CD8-positive, alpha-beta memory T cell (primary cell): ENCODE measurements at regions of chr17 and their contacts with region 1.

Region 1: DNA sequence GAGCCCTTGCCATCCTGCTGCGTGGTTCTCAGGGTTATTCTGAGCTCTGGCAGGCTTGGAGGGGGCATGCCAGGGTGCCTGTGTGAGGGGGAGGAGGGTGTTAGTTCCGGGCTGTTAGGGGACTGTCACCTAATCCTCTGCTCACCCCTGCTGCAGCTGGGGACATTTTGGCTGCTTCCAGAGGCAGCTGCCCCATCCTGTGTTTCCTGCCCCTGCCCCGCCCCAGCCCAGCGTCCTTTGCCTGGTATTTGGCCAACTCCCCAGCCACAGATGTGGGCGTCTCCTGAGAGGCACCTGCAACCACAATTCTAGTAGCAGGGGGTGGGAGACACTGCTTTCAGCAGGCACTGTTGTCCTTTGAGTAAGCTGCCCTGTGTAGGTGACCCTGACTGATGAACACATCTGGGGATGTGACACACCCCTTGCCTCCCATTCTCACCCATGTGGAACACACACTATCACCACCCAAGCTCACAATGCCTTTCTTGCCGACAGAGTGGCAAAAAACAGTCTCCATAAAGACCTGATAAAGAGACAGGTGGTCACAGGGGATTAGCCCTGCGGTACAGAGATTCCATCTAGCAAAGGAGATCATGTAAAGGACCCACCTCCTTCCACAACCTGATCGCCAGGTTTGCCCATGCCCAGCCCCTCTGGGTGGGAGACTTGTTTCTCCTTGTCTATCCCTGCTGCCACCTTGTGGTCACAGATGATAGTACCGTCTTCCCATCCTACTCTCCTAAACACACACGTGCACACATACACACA is at the start of gene CHRNE:
- DNase-seq: peak; percentile 63 to 82 (median 71)
- H3K4me3 ChIP-seq: peak within 1 kb of the TSS; percentile 61
- H3K4me3 Mint-ChIP-seq: peak within 1 kb of the TSS; percentile 70 to 86 (median 79)
- H3K27ac ChIP-seq: peak within 1 kb of the TSS; percentile 58
- H3K27ac Mint-ChIP-seq: peak within 1 kb of the TSS; percentile 83 to 96 (median 92)
- H3K4me1 ChIP-seq: peaks cover 46% of the 10 kb centered on the region
- H3K4me1 Mint-ChIP-seq: peaks cover 28 to 58% (median 35%) of the 10 kb centered on the region in 3 donors
- H3K27me3 ChIP-seq: no peaks in the 10 kb centered on the region
- H3K27me3 Mint-ChIP-seq: peaks cover 0 to 7% of the 10 kb centered on the region in 2 donors
- total RNA-seq, gene CHRNE: 0.37 to 0.38 TPM

Region 2: DNA sequence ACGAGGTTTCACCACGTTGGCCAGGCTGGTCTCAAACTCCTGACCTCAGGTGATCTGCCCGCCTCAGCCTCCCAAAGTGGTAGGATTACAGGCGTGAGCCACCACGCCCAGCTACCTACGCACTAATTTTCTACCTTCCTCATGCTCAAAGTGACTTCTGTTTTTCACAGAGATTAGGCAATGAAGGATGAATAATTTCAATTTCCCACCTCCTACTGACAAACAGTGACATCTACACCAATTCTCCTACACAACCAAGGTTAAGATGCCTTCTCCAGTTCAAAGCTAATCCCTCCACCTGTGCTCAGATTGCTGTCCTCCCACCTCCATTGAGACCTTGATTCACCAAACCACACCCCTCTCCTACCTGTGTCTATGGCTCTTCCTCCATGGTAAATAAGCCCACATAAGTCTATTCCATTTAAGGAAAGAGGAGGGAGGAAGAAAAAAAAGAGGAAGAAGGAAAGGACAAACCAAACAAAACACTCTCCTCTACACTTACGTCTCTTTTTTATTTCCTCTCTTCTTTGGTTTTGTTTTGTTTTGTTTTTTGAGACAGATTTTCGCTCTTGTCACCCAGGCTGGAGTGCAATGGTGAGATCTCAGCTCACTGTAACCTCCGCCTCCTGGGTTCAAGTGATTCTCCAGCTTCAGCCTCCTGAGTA is 177.5 kb before region 1 on chr17:
- CTCF ChIA-PET with region 1: no interaction called
- POLR2A ChIA-PET with region 1: no interaction called
- DNase-seq: no peak
- H3K4me3 ChIP-seq: no peak overlapping the region
- H3K4me3 Mint-ChIP-seq: no peak overlapping the region
- H3K27ac ChIP-seq: no peak overlapping the region
- H3K27ac Mint-ChIP-seq: no peak overlapping the region
- H3K4me1 ChIP-seq: no peaks in the 10 kb centered on the region
- H3K4me1 Mint-ChIP-seq: peaks cover 14 to 24% (median 15%) of the 10 kb centered on the region in 3 donors
- H3K27me3 ChIP-seq: no peaks in the 10 kb centered on the region
- H3K27me3 Mint-ChIP-seq: no peaks in the 10 kb centered on the region

Region 3: DNA sequence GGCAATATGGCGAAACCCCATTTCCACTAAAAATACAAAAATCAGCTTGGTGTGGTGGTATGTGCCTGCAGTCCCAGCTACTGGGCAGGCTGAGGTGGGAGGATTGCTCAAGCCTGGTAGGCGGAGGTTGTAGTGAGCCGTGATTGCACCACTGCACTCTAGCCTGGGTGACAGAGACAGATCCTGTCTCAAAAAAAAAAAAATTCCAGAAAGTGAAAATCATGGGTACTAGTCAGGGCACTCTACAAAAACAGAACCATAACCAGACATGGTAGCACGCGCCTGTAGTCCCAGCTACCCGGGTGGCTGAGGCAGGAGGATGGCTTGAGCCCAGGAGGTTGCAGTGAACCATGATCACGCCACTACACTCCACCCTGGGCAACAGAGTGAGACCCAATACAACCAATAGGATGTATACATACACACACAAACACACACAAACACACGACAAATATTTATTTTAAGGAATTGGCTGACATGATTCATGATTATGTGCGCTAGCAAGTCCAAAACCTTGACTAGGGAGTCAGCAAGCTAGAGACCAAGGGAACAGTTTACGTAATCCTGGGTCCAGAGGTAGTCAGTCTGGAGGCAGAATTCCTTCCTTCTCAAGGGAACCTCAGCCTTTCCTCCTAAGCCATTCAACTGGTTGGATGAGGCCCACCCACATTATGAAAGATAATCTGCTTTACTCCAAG is 17.3 kb after region 1 on chr17:
- CTCF ChIA-PET with region 1: no interaction called
- POLR2A ChIA-PET with region 1: no interaction called
- DNase-seq: no peak
- H3K4me3 ChIP-seq: no peak overlapping the region
- H3K4me3 Mint-ChIP-seq: no peak overlapping the region
- H3K27ac ChIP-seq: no peak overlapping the region
- H3K27ac Mint-ChIP-seq: no peak overlapping the region
- H3K4me1 ChIP-seq: no peaks in the 10 kb centered on the region
- H3K4me1 Mint-ChIP-seq: peaks cover 0 to 1% (median 0%) of the 10 kb centered on the region in 3 donors
- H3K27me3 ChIP-seq: no peaks in the 10 kb centered on the region
- H3K27me3 Mint-ChIP-seq: no peaks in the 10 kb centered on the region

Region 4: GRCh38 chr17:4939796-4940624 is 36.8 kb after region 1 on chr17 and contains the starts of genes RNF167 and SLC25A11:
- CTCF ChIA-PET with region 1: interaction called, 25 read pairs
- POLR2A ChIA-PET with region 1: interaction called, 12 read pairs
- DNase-seq: peak; percentile 89 to 99 (median 97)
- H3K4me3 ChIP-seq: peak within 1 kb of the TSS; percentile 97
- H3K4me3 Mint-ChIP-seq: peak within 1 kb of the TSS; percentile 86 to 97 (median 96)
- H3K27ac ChIP-seq: peak within 1 kb of the TSS; percentile 85
- H3K27ac Mint-ChIP-seq: peak within 1 kb of the TSS; percentile 89 to 98 (median 96)
- H3K4me1 ChIP-seq: peaks cover 57% of the 10 kb centered on the region
- H3K4me1 Mint-ChIP-seq: peaks cover 56 to 79% (median 56%) of the 10 kb centered on the region in 3 donors
- H3K27me3 ChIP-seq: no peaks in the 10 kb centered on the region
- H3K27me3 Mint-ChIP-seq: peaks cover 0 to 4% of the 10 kb centered on the region in 2 donors
- total RNA-seq, gene RNF167: 187 to 192 TPM
- total RNA-seq, gene SLC25A11: 90.0 to 101 TPM